H1 (cell line): ENCODE measurements at regions of chr2 and their contacts with region 1.

Region 1: DNA sequence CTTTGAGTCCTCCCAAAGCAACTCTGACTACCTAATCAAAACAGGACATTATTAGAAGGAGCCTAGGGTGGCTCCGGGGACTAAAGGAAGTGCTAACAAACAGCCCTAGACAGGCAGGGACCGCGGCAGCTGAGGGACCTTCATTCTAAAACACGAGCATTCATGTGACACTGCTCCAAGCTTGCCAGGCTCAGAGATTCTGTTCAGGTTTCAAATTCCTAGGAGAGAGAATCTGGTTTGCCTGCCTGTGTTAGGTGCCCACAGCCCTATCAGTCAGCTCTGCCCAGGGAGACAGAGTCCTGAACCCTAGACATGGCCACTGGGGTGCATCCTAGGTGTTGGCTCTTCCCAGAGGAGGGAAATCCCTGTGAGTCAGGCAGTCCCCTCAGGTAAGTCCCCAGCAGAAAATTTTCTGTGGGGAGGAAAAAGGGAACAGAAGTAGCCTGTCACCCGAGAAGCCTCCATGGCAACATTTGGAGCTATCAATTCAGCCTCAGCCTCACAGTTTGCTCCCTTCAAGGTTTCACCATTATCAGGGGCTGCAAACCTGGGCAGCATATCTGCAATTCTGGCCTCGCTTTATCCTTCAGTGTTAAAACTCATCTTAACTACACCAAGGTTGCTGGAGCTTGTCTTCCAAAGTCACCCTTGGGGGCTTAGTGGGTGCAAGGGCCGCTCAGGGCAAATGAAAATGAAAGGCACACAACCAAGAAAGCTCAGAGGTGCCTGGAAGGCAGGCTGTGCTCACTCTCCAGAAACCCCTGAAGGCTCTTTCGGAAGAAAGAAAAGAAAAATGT is 28.6 kb downstream of the PCBP1 start:
- DNase-seq: no peak
- H3K4me3 ChIP-seq: no peak overlapping the region
- H3K27ac ChIP-seq: peak overlapping the region; percentile 11; the same call in 1 of the 2 replicates
- H3K4me1 ChIP-seq: peaks cover 5 to 15% (median 11%) of the 10 kb centered on the region in 4 experiments
- H3K27me3 ChIP-seq: no peaks in the 10 kb centered on the region
- CTCF ChIP-seq: no peak
- EP300 ChIP-seq: no peak
- POLR2A ChIP-seq: no peak
- RAD21 ChIP-seq: no peak

Region 2: GRCh38 chr2:70094978-70095719 is 20.7 kb before region 1 on chr2:
- CTCF ChIA-PET with region 1: interaction called, 12 read pairs
- POLR2A ChIA-PET with region 1: interaction called, 1,553 read pairs
- DNase-seq: no peak
- H3K4me3 ChIP-seq: no peak overlapping the region
- H3K27ac ChIP-seq: no peak overlapping the region
- H3K4me1 ChIP-seq: peaks cover 0 to 3% (median under 1%) of the 10 kb centered on the region in 4 experiments; a peak in 3 of 7 replicates
- H3K27me3 ChIP-seq: no peaks in the 10 kb centered on the region
- CTCF ChIP-seq: no peak
- EP300 ChIP-seq: no peak
- POLR2A ChIP-seq: no peak
- RAD21 ChIP-seq: no peak